ENCODE measurements at regions of chr14 and their contacts with region 1.

Region 1: DNA sequence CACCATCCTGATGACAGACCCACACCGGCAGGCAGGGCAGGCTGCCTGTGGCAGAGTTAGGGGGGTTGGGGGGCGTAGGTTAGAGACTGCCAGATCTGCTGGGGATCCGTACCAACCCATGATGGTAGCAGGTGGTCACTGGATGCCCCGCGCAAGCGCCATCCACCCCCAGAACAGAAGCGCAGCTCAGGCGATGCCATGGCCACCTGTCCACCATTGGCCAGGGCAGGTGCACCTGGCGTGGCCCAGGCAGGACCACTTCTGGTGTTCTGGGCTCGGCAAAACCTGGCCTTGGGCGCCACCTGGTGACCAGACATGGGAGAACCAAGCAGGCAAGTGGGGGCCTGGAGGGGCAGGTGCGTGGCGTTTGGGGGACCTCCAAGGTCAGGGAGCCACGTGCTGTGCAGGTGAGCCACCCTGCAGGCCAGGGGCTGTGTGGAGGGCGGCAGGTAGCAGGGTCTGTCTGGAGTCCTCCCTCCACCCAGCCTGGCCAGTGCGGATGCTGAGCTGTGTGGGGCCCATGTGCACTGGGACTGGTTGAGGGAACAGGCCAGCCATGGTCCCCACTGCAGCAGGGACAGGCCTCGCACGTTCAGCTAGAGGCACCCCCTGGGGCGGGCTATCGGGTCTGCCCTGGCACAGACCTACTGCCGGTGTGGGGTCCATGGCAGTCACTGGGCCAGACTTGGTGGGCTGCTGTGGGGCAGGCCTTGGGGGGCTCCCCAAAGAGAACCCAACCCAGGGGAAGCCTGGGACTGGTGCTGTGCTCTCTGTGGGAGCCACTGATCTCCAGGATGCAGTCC is 15.6 kb downstream of the BAG5 start:
- DNase-seq: peak; percentile 72 to 76
- H3K4me3 ChIP-seq: no peak overlapping the region
- H3K27ac ChIP-seq: no peak overlapping the region
- H3K4me1 ChIP-seq: peaks cover 44 to 84% of the 10 kb centered on the region in 2 donors
- H3K27me3 ChIP-seq: no peaks in the 10 kb centered on the region
- CTCF ChIP-seq: peak; percentile 78 to 96 (median 92)
- POLR2A ChIP-seq: no peak

Region 2: DNA sequence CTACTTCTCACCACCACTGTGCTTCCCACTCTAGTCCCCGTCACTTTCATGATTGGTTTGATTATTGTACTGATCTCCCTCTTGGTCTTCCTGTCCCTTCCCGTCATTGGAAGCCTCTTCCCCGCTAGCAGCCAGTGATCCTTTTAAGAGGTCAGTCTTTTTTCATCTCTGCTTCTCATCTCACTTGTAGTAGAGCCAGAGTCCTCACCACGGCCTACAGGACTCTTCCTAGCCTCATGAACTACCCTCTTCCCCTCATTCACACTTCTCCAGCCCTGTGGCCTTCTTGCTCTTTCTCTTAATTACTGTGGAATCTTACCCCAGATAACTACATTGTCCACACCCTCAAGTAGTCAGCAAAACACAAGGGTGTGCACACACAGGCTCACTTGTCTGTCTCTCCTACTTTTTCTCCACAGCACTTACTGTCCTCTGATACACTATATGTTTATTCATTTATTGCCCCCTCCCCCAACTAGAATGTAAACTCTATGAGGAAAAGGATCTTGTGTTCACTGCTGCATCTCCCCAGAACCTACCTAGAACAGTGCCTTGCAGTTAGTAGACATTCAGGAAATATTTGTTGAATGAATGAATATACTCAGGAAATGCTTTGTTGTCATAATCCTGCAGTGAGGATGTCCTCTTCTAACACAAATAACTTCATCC is 90.6 kb before region 1 on chr14:
- intact Hi-C with region 1: no loop called
- DNase-seq: no peak
- H3K4me3 ChIP-seq: no peak overlapping the region
- H3K27ac ChIP-seq: no peak overlapping the region
- H3K4me1 ChIP-seq: peaks cover 4 to 14% of the 10 kb centered on the region in 2 donors
- H3K27me3 ChIP-seq: no peaks in the 10 kb centered on the region
- CTCF ChIP-seq: no peak
- POLR2A ChIP-seq: no peak

Region 3: DNA sequence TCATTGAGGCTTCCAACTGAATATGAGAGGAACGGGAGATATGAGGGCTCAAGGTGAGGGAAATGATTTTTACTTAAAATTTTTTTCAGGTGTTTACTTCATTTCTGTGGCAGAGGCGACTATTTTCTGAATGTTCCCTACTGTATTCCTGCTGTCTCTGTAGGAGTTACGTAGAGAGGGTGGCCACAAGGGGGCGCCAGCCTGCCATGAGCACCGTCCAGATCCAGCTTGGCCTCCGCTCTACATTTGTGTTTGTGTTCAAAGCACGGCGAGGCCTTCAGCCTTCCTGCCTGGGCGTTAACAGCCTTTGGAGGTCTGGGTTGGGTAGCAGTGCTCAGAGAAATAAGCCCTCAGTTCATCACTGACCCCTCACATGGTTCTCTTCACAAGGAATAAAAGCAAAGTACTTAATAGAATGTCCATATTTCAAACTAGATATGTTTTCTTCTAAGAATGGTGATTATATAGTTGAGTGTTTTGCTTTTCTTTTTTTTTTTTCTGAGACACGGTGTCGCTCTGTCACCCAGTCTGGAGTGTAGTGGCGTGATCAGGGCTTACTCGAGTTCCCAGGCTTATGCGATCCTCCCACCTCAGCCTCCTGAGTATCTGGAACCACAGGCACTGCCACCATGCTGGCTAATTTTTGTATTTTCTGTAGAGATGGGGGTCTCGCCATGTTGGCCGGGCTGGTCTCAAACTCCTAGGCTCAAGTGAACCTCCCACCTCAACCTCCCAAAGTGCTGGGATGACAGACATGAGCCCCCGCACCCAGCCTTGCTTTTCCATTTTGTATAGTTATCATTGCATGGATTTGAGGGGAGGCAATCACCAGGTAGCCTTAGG is 46.5 kb before region 1 on chr14:
- intact Hi-C with region 1: loop called (anchors 2 kb)
- DNase-seq: peak; percentile 94
- H3K4me3 ChIP-seq: no peak overlapping the region
- H3K27ac ChIP-seq: peak overlapping the region; percentile 6 to 46 (median 21)
- H3K4me1 ChIP-seq: peaks cover 8 to 9% of the 10 kb centered on the region in 2 donors
- H3K27me3 ChIP-seq: no peaks in the 10 kb centered on the region
- CTCF ChIP-seq: peak; percentile 82 to 94 (median 91)
- POLR2A ChIP-seq: no peak

Region 4: DNA sequence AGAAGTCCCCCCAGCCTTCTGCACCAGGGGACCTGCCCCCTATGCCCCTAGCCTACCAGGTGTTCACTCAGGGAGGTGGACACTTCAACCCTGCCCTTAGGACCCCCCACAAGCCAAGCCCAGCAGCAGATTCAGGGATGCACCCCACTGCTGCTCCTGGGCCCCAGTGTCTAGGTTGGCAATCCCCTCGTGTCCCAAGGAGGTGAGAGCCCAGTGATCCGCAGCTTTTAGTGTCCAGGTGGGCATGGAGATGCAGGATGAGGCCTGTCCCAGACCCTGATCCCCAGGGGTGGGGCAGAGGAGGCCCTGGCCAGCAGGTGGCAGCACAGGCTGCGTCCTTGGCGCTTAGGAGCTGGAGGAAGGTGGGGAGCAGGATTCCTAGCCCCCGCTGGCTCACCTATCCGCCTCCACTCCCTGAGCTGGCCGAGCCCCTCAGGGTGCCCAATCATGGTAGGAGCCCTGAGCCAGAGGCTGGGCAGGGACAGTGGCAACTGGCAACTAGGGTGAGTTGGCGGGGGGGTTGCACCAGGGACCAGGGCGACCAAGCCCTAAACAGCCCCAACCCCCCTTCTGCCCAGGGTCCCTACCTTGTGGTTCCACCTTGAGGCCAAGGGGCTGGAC is 28.3 kb before region 1 on chr14:
- intact Hi-C with region 1: loop called (anchors 2 kb)
- DNase-seq: peak; percentile 60 to 74
- H3K4me3 ChIP-seq: no peak overlapping the region
- H3K27ac ChIP-seq: peak overlapping the region; percentile 70 to 98 (median 94)
- H3K4me1 ChIP-seq: peaks cover 74 to 78% of the 10 kb centered on the region in 2 donors
- H3K27me3 ChIP-seq: no peaks in the 10 kb centered on the region
- CTCF ChIP-seq: peak; percentile 69 to 86 (median 76)
- POLR2A ChIP-seq: no peak